Mammary epithelial cell (primary cell): ENCODE measurements at regions of chr4 and their contacts with region 1.

Region 1: DNA sequence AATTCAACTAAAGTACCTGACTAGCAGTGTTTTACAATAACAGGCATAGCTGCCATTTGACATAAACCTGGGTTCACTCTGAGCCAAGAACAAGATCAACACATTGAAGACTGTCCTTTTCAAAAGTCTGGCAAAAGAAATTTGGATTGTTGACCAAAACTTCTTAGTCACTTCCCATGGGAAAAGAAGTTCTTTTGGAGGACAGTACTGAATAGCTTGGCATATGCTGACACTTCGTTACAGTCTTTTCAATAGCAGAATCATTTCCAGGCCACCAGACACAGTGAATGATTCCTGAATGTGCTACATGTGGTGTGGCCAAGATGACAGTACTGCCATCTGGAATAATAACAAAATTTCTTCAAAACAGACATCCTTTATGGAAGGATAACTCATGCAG is 560.3 kb downstream of the GRID2 start:
- DNase-seq: no peak
- H3K4me3 ChIP-seq: no peak overlapping the region
- H3K27ac ChIP-seq: no peak overlapping the region
- H3K4me1 ChIP-seq: no peaks in the 10 kb centered on the region
- H3K27me3 ChIP-seq: no peaks in the 10 kb centered on the region
- CTCF ChIP-seq: no peak

Region 2: GRCh38 chr4:92679149-92679548 is 184.9 kb before region 1 on chr4:
- CTCF ChIA-PET with region 1: no interaction called
- dilution Hi-C with region 1: no loop called
- in situ Hi-C with region 1: no loop called
- intact Hi-C with region 1: no loop called
- DNase-seq: no peak
- H3K4me3 ChIP-seq: no peak overlapping the region
- H3K27ac ChIP-seq: no peak overlapping the region
- H3K4me1 ChIP-seq: no peaks in the 10 kb centered on the region
- H3K27me3 ChIP-seq: no peaks in the 10 kb centered on the region
- CTCF ChIP-seq: no peak

Region 3: DNA sequence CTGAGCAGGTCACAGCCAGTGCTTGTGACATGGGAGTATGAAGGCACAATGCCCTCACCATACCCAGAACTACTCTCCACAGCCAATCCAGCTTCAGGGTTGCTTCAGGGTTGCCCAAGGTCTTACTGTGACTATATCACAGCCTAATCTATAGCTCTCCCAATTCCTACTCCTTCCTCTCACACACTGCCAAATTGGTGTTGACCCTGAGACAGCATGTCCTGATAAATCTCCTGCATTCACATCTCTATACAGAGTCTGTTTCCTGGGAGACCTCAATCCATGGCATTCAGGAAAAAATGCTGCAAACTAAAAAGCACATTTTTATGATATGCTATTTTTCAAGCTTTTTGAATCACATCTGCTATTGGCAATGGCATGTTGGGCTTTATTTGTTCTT is 103.7 kb before region 1 on chr4:
- CTCF ChIA-PET with region 1: no interaction called
- dilution Hi-C with region 1: loop called (anchors 5 kb)
- in situ Hi-C with region 1: no loop called
- intact Hi-C with region 1: no loop called
- DNase-seq: no peak
- H3K4me3 ChIP-seq: no peak overlapping the region
- H3K27ac ChIP-seq: no peak overlapping the region
- H3K4me1 ChIP-seq: no peaks in the 10 kb centered on the region
- H3K27me3 ChIP-seq: no peaks in the 10 kb centered on the region
- CTCF ChIP-seq: no peak